ENCODE measurements at regions of chr11 and their contacts with region 1.

Region 1: DNA sequence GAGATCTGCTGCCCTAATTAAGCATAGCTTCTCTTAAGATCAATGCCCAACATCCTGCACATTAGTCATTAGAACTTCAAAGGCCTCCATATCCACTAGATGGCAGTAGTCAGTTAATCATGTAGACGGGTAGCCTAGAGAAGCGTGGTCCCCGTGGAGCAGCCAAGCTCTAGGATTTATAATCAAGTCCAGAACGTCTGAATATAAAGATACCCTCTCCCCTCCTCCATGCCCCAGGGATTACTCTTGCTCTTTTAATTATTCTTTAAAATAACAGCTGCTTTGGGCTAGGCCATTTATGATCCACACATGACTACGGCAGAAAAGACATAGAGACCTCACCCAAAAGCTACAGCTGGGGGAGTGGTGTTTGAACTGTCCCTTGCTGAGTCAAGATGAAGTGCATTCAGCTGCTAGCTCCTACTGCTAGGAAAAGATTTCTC is 327.6 kb upstream of the PLET1 start:
- DNase-seq: peak; percentile 69
- H3K4me3 ChIP-seq: no peak overlapping the region
- H3K27ac ChIP-seq: peak overlapping the region in 1 of 2 experiments; percentile 62; a peak in 2 of 4 replicates
- H3K4me1 ChIP-seq: peaks cover 7% of the 10 kb centered on the region in 2 experiments; a peak in 3 of 4 replicates
- H3K27me3 ChIP-seq: no peaks in the 10 kb centered on the region
- CTCF ChIP-seq: peak; percentile 85
- EP300 ChIP-seq: no peak
- RAD21 ChIP-seq: peak; percentile 97

Region 2: GRCh38 chr11:112555491-112556364 is 32.5 kb before region 1 on chr11:
- CTCF ChIA-PET with region 1: no interaction called
- POLR2A ChIA-PET with region 1: no interaction called
- DNase-seq: peak; percentile 66
- H3K4me3 ChIP-seq: no peak overlapping the region
- H3K27ac ChIP-seq: no peak overlapping the region
- H3K4me1 ChIP-seq: no peaks in the 10 kb centered on the region; a peak in 2 of 4 replicates
- H3K27me3 ChIP-seq: no peaks in the 10 kb centered on the region
- CTCF ChIP-seq: peak; percentile 63
- EP300 ChIP-seq: no peak
- RAD21 ChIP-seq: peak; percentile 69

Region 3: GRCh38 chr11:112784323-112785073 is 196.2 kb after region 1 on chr11:
- CTCF ChIA-PET with region 1: interaction called, 20 read pairs
- POLR2A ChIA-PET with region 1: no interaction called
- DNase-seq: peak; percentile 84
- H3K4me3 ChIP-seq: peak overlapping the region; percentile 36 to 44
- H3K27ac ChIP-seq: peak overlapping the region; percentile 81 to 92
- H3K4me1 ChIP-seq: peaks cover 43 to 44% of the 10 kb centered on the region in 2 experiments
- H3K27me3 ChIP-seq: no peaks in the 10 kb centered on the region
- CTCF ChIP-seq: peak; percentile 24; the same call in 1 of the 2 replicates
- EP300 ChIP-seq: peak; percentile 79 to 92
- RAD21 ChIP-seq: peak; percentile 53

Region 4: GRCh38 chr11:112961146-112961668 is 372.9 kb after region 1 on chr11 and contains the start of gene NCAM1:
- CTCF ChIA-PET with region 1: interaction called, 22 read pairs
- POLR2A ChIA-PET with region 1: interaction called, 3 read pairs
- DNase-seq: peak; percentile 89
- H3K4me3 ChIP-seq: peak within 1 kb of the TSS; percentile 83 to 95
- H3K27ac ChIP-seq: peak within 1 kb of the TSS in 1 of 2 experiments; percentile 93; a peak in 3 of 4 replicates
- H3K4me1 ChIP-seq: peaks cover 0 to 13% of the 10 kb centered on the region in 2 experiments; a peak in 2 of 4 replicates
- H3K27me3 ChIP-seq: no peaks in the 10 kb centered on the region; the same call in 1 of the 2 replicates
- CTCF ChIP-seq: no peak
- EP300 ChIP-seq: peak; percentile 53 to 78; a peak in 3 of 4 replicates
- RAD21 ChIP-seq: peak; percentile 55
- polyA plus RNA-seq, gene NCAM1: 19.4 and 20.7 TPM in 2 replicates

Region 5: GRCh38 chr11:113113801-113114706 is 525.8 kb after region 1 on chr11:
- CTCF ChIA-PET with region 1: interaction called, 33 read pairs
- POLR2A ChIA-PET with region 1: interaction called, 4 read pairs
- DNase-seq: peak; percentile 49
- H3K4me3 ChIP-seq: no peak overlapping the region
- H3K27ac ChIP-seq: peak overlapping the region in 1 of 2 experiments; percentile 22; a peak in 2 of 4 replicates
- H3K4me1 ChIP-seq: peaks cover 6 to 20% of the 10 kb centered on the region in 2 experiments; a peak in 2 of 4 replicates
- H3K27me3 ChIP-seq: no peaks in the 10 kb centered on the region
- CTCF ChIP-seq: peak; percentile 81
- EP300 ChIP-seq: no peak
- RAD21 ChIP-seq: peak; percentile 92

Region 6: DNA sequence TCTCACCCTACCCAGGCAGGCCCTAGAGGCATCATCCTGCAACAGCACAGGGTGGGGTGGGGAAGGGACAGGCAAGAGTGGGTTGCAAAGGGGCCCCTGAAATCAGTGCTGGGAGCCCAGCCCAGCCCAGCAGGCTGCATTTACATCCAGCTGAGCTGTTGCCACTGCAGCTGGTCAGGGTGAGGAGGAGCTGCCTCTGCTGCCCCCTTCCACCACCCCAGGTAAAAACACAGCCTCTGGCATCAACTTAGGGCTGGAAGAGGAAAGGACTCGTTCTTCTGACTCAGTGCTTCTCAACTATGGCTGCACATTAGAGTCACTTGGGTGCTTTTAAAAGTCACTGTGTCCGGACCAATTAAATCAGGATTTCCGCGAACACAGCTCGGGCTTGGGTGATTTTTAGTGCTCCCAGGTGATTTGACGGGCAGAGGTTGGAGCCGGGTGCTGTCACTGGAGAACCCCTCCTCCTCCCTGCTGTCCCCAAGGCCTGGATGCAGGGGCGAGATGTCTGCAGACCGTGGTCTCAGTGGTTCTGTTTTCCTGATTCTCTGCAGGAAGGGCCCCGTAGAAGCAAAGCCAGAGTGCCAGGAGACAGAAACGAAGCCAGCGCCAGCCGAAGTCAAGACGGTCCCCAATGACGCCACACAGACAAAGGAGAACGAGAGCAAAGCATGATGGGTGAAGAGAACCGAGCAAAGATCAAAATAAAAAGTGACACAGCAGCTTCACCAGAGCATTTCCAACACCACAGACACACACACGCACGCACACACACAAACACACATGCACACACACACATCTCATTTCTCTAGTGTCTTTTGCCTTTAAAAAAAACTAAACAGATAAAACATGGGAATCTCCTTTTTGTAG is 686.7 kb after region 1 on chr11:
- CTCF ChIA-PET with region 1: interaction called, 10 read pairs
- POLR2A ChIA-PET with region 1: no interaction called
- DNase-seq: peak; percentile 44
- H3K4me3 ChIP-seq: no peak overlapping the region
- H3K27ac ChIP-seq: peak overlapping the region in 1 of 2 experiments; percentile 89; a peak in 2 of 4 replicates
- H3K4me1 ChIP-seq: peaks cover 0 to 29% of the 10 kb centered on the region in 2 experiments; a peak in 1 of 4 replicates
- H3K27me3 ChIP-seq: no peaks in the 10 kb centered on the region
- CTCF ChIP-seq: peak; percentile 12; the same call in 1 of the 2 replicates
- EP300 ChIP-seq: no peak
- RAD21 ChIP-seq: peak; percentile 47